ENCODE measurements at regions of chr17 and their contacts with region 1.

Region 1: GRCh38 chr17:21318439-21318838 is 33.9 kb downstream of the MAP2K3 start:
- DNase-seq: no peak
- H3K4me3 Mint-ChIP-seq: no peak overlapping the region
- H3K27ac Mint-ChIP-seq: no peak overlapping the region
- H3K4me1 Mint-ChIP-seq: peaks cover 7% of the 10 kb centered on the region
- H3K27me3 Mint-ChIP-seq: peaks cover 2% of the 10 kb centered on the region

Region 2: GRCh38 chr17:21304091-21304490 is 14.3 kb before region 1 on chr17:
- CTCF ChIA-PET with region 1: no interaction called
- POLR2A ChIA-PET with region 1: no interaction called
- intact Hi-C with region 1: no loop called
- DNase-seq: no peak
- H3K4me3 Mint-ChIP-seq: no peak overlapping the region
- H3K27ac Mint-ChIP-seq: no peak overlapping the region
- H3K4me1 Mint-ChIP-seq: no peaks in the 10 kb centered on the region
- H3K27me3 Mint-ChIP-seq: no peaks in the 10 kb centered on the region

Region 3: GRCh38 chr17:21457051-21458026 is 138.9 kb after region 1 on chr17:
- CTCF ChIA-PET with region 1: no interaction called
- POLR2A ChIA-PET with region 1: no interaction called
- intact Hi-C with region 1: loop called (anchors 10 kb)
- DNase-seq: peak; percentile 97
- H3K4me3 Mint-ChIP-seq: no peak overlapping the region
- H3K27ac Mint-ChIP-seq: peak overlapping the region; percentile 53
- H3K4me1 Mint-ChIP-seq: peaks cover 14% of the 10 kb centered on the region
- H3K27me3 Mint-ChIP-seq: peaks cover 6% of the 10 kb centered on the region

Measured in activated CD4-positive, alpha-beta memory T cell treated with anti-CD3 and anti-CD28 coated beads for 36 hours (primary cell).